ENCODE measurements at regions of chr5 and their contacts with region 1.

Region 1: DNA sequence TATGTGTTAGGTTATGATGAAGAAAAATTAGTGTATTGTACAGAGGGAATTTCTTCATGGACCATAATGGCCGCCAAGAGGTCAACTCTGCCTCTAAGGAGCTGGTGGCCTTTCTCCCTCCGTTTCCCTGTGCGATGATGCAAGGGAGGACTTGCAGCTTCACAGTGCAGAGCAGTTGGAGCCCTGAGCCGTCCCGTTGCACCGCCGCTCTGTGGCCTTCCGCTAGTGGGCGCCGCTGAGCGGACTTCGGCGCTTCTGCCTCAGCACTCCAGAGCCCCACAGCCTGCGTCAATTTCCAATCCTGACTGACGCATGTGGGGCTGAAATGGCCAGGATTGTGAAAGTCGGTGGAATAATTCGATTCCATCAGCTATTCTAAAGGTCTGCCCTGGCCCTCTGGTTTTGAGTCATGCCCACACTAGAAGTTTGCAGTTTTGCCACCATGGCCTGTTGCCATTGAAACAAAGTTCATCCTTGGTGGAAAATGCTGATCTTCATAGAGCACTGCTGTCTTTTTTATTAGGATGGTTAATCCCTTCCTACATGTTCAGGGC is 22.7 kb upstream of the LECT2 start:
- DNase-seq: peak; percentile 92
- ATAC-seq: peak; percentile 98
- H3K4me3 Mint-ChIP-seq: no peak overlapping the region
- H3K27ac Mint-ChIP-seq: no peak overlapping the region
- H3K4me1 Mint-ChIP-seq: peaks cover 25% of the 10 kb centered on the region
- H3K27me3 Mint-ChIP-seq: peaks cover 12% of the 10 kb centered on the region
- CTCF ChIP-seq: peak; percentile 74

Region 2: GRCh38 chr5:135964670-135965320 is 12.7 kb before region 1 on chr5:
- CTCF ChIA-PET with region 1: interaction called, 15 read pairs
- POLR2A ChIA-PET with region 1: no interaction called
- DNase-seq: no peak
- ATAC-seq: no peak
- H3K4me3 Mint-ChIP-seq: no peak overlapping the region
- H3K27ac Mint-ChIP-seq: no peak overlapping the region
- H3K4me1 Mint-ChIP-seq: peaks cover 3% of the 10 kb centered on the region; the same call in 1 of the 2 replicates
- H3K27me3 Mint-ChIP-seq: no peaks in the 10 kb centered on the region; the same call in 1 of the 2 replicates
- CTCF ChIP-seq: no peak

Region 3: DNA sequence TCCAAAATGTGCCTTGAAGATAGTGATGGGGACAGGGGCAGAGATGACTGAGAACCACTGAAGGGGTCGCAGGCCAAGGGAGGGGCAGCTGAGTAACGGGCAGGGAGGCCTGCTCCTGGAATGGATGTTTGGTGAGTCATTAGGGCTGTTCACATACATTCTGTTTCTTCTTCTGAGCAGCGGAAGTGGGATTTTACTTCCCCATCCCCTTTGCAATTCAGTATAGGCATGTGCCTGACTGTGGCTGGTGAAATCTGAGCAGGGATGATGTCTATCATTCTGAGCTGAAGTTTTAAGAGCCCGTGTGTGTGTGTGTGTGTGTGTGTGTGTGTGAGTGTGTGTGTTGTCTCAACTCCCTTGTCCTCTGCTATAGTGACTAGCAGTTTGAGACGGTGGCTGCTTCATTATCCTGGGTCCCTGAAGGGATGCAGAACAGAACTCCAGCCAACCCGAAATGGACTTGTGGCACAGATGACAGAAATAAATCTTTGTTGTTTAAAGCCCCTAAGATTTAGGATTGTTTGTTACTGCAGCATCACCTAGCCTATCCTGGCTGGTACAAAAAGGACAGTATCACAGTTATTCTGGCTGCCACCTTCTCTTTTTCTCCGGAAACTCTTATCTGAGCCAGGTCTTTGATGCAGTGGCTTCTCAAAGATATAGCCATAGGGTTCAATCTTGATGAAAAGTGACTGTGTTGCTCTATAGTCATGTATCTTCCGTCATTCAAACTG is 22.1 kb after region 1 on chr5:
- CTCF ChIA-PET with region 1: interaction called, 21 read pairs
- POLR2A ChIA-PET with region 1: no interaction called
- DNase-seq: no peak
- ATAC-seq: no peak
- H3K4me3 Mint-ChIP-seq: no peak overlapping the region
- H3K27ac Mint-ChIP-seq: no peak overlapping the region
- H3K4me1 Mint-ChIP-seq: no peaks in the 10 kb centered on the region
- H3K27me3 Mint-ChIP-seq: no peaks in the 10 kb centered on the region; the same call in 1 of the 2 replicates
- CTCF ChIP-seq: no peak

Region 4: GRCh38 chr5:136028782-136029742 is 51.6 kb after region 1 on chr5 and contains the start of gene TGFBI:
- CTCF ChIA-PET with region 1: interaction called, 13 read pairs
- POLR2A ChIA-PET with region 1: no interaction called
- DNase-seq: peak; percentile 72
- ATAC-seq: peak; percentile 93
- H3K4me3 Mint-ChIP-seq: peak within 1 kb of the TSS; percentile 72
- H3K27ac Mint-ChIP-seq: no peak within 1 kb of the TSS
- H3K4me1 Mint-ChIP-seq: peaks cover 3% of the 10 kb centered on the region
- H3K27me3 Mint-ChIP-seq: peaks cover 70% of the 10 kb centered on the region
- CTCF ChIP-seq: no peak
- total RNA-seq, gene TGFBI: 7.2 to 9.1 TPM (median 7.8 TPM) in 3 replicates

Region 5: DNA sequence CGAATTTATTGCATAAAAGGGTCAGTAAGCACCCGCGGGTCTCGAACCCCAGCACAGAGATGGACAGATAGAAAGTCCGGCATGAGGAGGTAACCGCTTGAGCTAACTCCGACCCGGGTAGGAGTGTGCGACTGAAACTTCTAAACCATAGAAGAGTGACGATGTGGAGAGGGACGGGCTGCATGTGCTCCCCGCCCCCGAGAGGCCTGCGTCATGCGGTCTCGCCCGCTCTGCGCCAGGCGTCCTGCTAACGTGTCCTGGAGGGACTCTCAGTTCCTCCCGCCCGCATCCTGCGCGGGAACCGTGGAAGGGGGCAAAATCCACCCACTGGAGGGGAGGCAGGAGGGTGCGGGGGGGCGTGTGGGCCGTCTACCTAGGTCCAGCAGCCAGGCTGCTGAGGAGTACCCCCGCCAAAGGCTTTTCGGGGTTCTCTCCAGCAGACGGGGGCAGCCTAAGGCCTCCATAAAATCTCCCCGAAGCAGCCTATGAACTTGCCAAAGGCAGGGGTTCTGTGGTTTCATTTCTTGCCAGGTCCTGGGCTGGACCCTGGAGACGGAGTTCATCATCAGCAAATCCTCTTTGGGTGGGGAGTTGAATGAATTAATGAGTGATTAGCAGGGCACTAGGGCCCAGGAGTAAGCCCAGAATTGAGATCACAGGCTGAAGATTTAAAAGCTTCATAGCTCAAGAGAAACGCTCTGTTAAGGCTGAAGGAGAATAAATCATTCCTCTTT is 103.2 kb after region 1 on chr5:
- CTCF ChIA-PET with region 1: interaction called, 13 read pairs
- POLR2A ChIA-PET with region 1: no interaction called
- DNase-seq: peak; percentile 86
- ATAC-seq: peak; percentile 70
- H3K4me3 Mint-ChIP-seq: peak overlapping the region; percentile 85
- H3K27ac Mint-ChIP-seq: no peak overlapping the region; the same call in 1 of the 2 replicates
- H3K4me1 Mint-ChIP-seq: peaks cover 2% of the 10 kb centered on the region
- H3K27me3 Mint-ChIP-seq: peaks cover 27% of the 10 kb centered on the region
- CTCF ChIP-seq: no peak

Measured in WTC11 (cell line).